ENCODE measurements at regions of chr4 and their contacts with region 1.

Region 1: GRCh38 chr4:55008166-55009070 is 117.0 kb downstream of the KDR start:
- DNase-seq: peak; percentile 18
- H3K4me3 ChIP-seq: no peak overlapping the region
- H3K27ac ChIP-seq: no peak overlapping the region
- H3K4me1 ChIP-seq: no peaks in the 10 kb centered on the region
- H3K27me3 ChIP-seq: no peaks in the 10 kb centered on the region
- CTCF ChIP-seq: peak; percentile 59

Region 2: GRCh38 chr4:54800831-54801530 is 207.4 kb before region 1 on chr4:
- CTCF ChIA-PET with region 1: no interaction called
- POLR2A ChIA-PET with region 1: no interaction called
- intact Hi-C with region 1: no loop called
- DNase-seq: no peak
- H3K4me3 ChIP-seq: no peak overlapping the region
- H3K27ac ChIP-seq: no peak overlapping the region
- H3K4me1 ChIP-seq: no peaks in the 10 kb centered on the region
- H3K27me3 ChIP-seq: no peaks in the 10 kb centered on the region
- CTCF ChIP-seq: no peak

Region 3: DNA sequence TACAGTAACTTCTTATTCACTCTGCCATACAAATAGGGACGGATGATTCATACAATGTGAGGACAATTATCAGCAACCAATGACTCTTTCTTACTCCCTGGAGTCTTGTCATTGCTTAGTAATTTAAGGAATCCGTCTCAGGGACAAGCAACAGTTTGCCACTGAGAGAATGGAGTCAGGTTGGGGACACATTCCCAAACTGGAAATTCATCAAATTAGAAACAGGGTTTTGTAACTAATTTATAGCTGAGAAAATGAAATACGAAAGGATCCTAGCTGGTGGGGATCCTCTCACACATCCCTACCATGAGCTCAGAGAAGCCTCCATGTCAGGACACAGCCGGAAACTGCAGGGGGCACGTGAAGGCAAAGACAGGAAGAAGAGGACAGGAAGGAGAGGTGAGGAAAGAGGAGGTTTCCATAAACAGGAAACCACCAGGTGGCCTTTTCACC is 167.4 kb after region 1 on chr4:
- CTCF ChIA-PET with region 1: no interaction called
- POLR2A ChIA-PET with region 1: no interaction called
- intact Hi-C with region 1: loop called (anchors 10 kb)
- DNase-seq: peak; percentile 68
- H3K4me3 ChIP-seq: no peak overlapping the region
- H3K27ac ChIP-seq: peak overlapping the region; percentile 50
- H3K4me1 ChIP-seq: peaks cover 7% of the 10 kb centered on the region
- H3K27me3 ChIP-seq: no peaks in the 10 kb centered on the region
- CTCF ChIP-seq: no peak

Measured in A673 (cell line).